Activated T-helper 1 cell treated with anti-CD3 and anti-CD28 coated beads, Interleukin-12 subunit alpha, Interleukin-12 subunit beta, Interleukin-2, Interleukin-4 antibody, amounts not matched to agents 30 ng/mL and 10 ng/mL and 1 ng/mL, durations not matched to agents 14 hours and 24 hours and 36 hours (primary cell): ENCODE measurements at regions of chr2 and their contacts with region 1.

Region 1: GRCh38 chr2:19347619-19348562 is 10.5 kb downstream of the OSR1 start:
- DNase-seq: peak; percentile 98
- H3K4me3 Mint-ChIP-seq: peak overlapping the region; percentile 95
- H3K27ac Mint-ChIP-seq: peak overlapping the region; percentile 96
- H3K4me1 Mint-ChIP-seq: peaks cover 24% of the 10 kb centered on the region
- H3K27me3 Mint-ChIP-seq: peaks cover 36% of the 10 kb centered on the region

Region 2: GRCh38 chr2:17538844-17539554 is 1808.9 kb before region 1 on chr2:
- intact Hi-C with region 1: loop called (anchors 5 kb)
- DNase-seq: no peak
- H3K4me3 Mint-ChIP-seq: no peak overlapping the region
- H3K27ac Mint-ChIP-seq: no peak overlapping the region
- H3K4me1 Mint-ChIP-seq: peaks cover 5% of the 10 kb centered on the region
- H3K27me3 Mint-ChIP-seq: peaks cover 54% of the 10 kb centered on the region

Region 3: GRCh38 chr2:18560031-18560796 is 787.7 kb before region 1 on chr2 and contains the start of gene RDH14:
- intact Hi-C with region 1: loop called (anchors 1 kb)
- DNase-seq: peak; percentile 87
- H3K4me3 Mint-ChIP-seq: peak within 1 kb of the TSS; percentile 91
- H3K27ac Mint-ChIP-seq: peak within 1 kb of the TSS; percentile 91
- H3K4me1 Mint-ChIP-seq: peaks cover 38% of the 10 kb centered on the region
- H3K27me3 Mint-ChIP-seq: no peaks in the 10 kb centered on the region
- total RNA-seq, gene RDH14: 12.4 and 14.5 TPM in 2 replicates

Region 4: GRCh38 chr2:19901442-19902215 is 553.7 kb after region 1 on chr2 and contains the start of gene TTC32:
- intact Hi-C with region 1: loop called (anchors 1 kb)
- DNase-seq: peak; percentile 89
- H3K4me3 Mint-ChIP-seq: peak within 1 kb of the TSS; percentile 91
- H3K27ac Mint-ChIP-seq: peak within 1 kb of the TSS; percentile 94
- H3K4me1 Mint-ChIP-seq: peaks cover 48% of the 10 kb centered on the region
- H3K27me3 Mint-ChIP-seq: peaks cover 9% of the 10 kb centered on the region
- total RNA-seq, gene TTC32: 14.0 and 15.7 TPM in 2 replicates

Region 5: GRCh38 chr2:20350753-20351554 is 1003.1 kb after region 1 on chr2 and contains the start of gene PUM2:
- intact Hi-C with region 1: loop called (anchors 5 kb)
- DNase-seq: peak; percentile 97
- H3K4me3 Mint-ChIP-seq: peak within 1 kb of the TSS; percentile 92
- H3K27ac Mint-ChIP-seq: peak within 1 kb of the TSS; percentile 92
- H3K4me1 Mint-ChIP-seq: peaks cover 35% of the 10 kb centered on the region
- H3K27me3 Mint-ChIP-seq: no peaks in the 10 kb centered on the region
- total RNA-seq, gene PUM2: 125 and 131 TPM in 2 replicates

Region 6: GRCh38 chr2:20650880-20651730 is 1303.2 kb after region 1 on chr2 and contains the start of gene HS1BP3:
- intact Hi-C with region 1: loop called (anchors 2 kb)
- DNase-seq: peak; percentile 91
- H3K4me3 Mint-ChIP-seq: peak within 1 kb of the TSS; percentile 88
- H3K27ac Mint-ChIP-seq: peak within 1 kb of the TSS; percentile 92
- H3K4me1 Mint-ChIP-seq: peaks cover 22% of the 10 kb centered on the region
- H3K27me3 Mint-ChIP-seq: peaks cover 6% of the 10 kb centered on the region
- total RNA-seq, gene HS1BP3: 9.1 and 10.2 TPM in 2 replicates